ENCODE measurements at regions of chr5 and their contacts with region 1.

Region 1: DNA sequence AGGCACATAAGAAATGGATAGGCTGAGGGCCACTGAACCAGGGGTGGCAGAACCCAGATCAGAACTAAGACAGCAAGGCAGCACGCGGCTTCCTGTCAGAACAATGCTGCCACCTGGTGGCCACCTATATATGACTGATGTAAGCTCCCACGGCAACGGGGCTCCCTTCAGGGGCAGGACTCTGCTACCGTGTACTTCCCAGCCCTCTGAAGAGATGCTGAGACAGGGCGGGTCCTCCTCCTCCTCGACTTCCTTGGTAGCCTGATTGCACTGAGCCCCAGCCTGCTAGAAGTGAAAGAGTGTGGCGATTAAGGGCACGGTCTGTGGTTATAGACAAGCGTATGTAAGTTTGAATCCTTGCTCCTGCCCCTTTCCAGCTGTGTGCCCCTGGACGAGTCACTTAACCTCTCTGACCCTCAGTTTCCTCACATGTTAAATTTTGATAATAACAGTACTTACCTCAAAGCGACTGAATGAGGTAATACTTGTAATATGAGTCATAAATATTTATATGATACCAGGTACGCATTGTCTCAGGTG is 13.3 kb downstream of the RPS14 start:
- DNase-seq: peak; percentile 93
- ATAC-seq: peak; percentile 86 to 91

Region 2: DNA sequence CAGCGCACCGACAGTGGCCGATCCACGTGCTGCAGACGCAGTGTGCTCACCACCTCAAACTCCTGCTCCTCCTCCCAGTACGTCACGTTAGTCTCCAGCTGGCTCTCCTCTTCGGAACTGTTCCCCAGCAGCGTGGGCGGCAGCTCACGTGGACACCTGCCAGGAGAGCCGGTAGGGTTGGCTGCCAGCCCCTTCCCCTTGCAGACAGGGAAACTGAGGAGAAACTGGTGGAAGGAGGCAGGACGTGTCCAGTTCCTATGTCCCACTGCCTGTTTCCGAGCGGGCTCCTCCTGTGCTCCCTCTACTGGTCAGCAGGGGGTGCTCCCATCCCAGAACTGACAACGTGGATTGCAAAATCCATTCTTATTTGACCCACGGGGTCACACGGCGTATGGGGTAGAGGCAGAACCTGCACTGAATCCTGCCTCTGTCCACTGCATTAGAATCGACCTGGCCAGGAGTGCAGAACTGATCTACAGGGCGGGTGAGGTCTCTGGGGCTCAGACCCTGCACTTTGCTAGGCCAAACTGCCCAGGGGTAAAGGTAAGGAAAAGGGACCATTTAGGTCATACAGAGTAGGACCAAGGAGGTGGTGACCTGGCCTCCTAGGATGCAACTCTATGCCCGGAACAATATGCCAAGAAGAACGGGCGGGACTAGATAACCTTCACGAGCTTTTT is 306.3 kb before region 1 on chr5:
- intact Hi-C with region 1: loop called (anchors 5 to 10 kb)
- DNase-seq: peak; percentile 79
- ATAC-seq: peak; percentile 80 to 85

Region 3: DNA sequence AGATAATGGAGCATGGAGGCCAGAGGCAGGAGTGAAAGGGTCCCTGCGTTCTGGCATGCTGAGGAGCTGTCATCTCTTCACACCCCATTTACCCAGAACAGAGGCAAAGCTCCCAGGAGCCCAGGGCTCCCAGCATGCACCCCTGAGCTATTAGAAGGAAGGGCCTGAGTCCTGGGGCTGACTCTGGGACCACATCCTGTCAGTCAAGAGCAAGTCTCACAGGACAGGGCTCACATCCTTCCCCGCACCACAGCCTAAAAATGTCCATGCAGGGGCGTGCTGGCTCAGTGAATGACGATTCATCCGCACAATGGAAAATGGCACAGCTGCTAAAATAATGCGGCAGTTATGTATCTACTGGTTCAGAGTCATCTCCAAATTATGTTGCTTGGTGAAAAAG is 178.1 kb before region 1 on chr5:
- intact Hi-C with region 1: loop called in 1 of 2 experiments (anchors 10 kb)
- DNase-seq: no peak
- ATAC-seq: no peak

Region 4: DNA sequence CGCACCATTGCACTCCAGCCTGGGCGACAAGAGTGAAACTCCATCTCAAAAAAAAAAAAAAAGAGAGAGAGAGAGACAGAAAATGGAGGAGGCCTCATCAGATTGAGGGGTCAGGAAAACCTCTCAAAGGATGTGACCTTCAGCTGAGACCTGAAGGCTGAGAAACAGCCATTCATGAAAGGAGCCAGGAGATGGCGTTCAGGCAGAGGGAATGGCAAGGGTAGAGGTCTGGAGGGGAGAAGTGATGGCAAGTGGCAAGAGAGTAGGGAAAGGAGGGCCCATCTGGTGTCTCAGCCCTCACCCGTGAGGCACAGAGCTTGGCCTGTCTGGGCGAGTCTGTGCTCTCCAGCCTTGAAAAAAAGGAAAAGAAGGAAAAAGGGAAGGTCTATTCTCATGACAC is 163.7 kb before region 1 on chr5:
- intact Hi-C with region 1: loop called in 1 of 2 experiments (anchors 5 kb)
- DNase-seq: no peak
- ATAC-seq: peak in 1 of 2 donors; percentile 35

Region 5: DNA sequence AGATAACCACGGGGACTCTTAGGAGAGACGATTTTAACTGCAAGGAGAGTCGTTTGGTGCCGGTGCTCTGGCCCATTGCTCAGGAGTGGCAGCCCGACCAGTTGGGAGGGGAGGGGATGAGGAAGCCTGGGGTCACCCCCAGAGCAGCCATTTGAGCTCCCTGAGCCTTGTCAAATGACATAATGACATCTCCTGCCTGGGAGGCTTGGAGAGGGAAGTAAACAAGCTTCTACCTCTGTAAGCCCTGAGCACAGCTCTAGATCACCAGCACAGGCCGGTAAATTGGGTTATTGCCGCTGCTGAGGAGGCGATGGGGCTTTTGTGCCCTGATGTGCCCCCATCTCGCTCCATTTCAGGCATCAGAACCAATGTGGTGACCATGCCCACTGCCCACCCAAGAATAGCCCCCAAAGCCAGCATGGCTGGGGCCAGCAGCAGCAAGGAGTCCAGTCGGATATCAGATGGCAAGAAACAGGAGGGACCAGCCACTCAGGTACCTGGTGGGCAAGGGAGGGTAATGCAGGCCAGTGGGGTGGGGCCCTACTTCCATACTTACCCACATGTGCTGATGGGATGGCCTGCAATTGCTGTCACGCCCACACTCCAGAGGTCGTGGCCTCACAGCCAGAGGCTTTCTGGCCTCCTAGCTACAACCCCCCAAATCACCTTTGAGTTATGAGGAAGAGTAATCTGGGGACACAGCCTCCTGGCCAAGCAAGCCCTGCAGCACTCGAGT is 46.5 kb before region 1 on chr5:
- intact Hi-C with region 1: no loop called
- DNase-seq: no peak
- ATAC-seq: no peak

Region 6: GRCh38 chr5:150481972-150482406 is 45.8 kb after region 1 on chr5:
- intact Hi-C with region 1: no loop called
- DNase-seq: no peak
- ATAC-seq: no peak

Region 7: GRCh38 chr5:150529555-150529954 is 93.3 kb after region 1 on chr5:
- intact Hi-C with region 1: no loop called
- DNase-seq: no peak
- ATAC-seq: no peak